ENCODE measurements at regions of chr7 and their contacts with region 1.

Region 1: GRCh38 chr7:141975806-141976523 is 2.4 kb upstream of the TAS2R38 start:
- DNase-seq: peak; percentile 85 to 90
- H3K4me3 ChIP-seq: peak overlapping the region; percentile 18; the same call in 1 of the 2 replicates
- H3K4me3 Mint-ChIP-seq: peak overlapping the region; percentile 59
- H3K27ac Mint-ChIP-seq: peak overlapping the region; percentile 42
- H3K4me1 ChIP-seq: no peaks in the 10 kb centered on the region
- H3K4me1 Mint-ChIP-seq: peaks cover 6% of the 10 kb centered on the region
- H3K27me3 ChIP-seq: no peaks in the 10 kb centered on the region
- H3K27me3 Mint-ChIP-seq: no peaks in the 10 kb centered on the region
- CTCF ChIP-seq: peak; percentile 89 to 93

Region 2: DNA sequence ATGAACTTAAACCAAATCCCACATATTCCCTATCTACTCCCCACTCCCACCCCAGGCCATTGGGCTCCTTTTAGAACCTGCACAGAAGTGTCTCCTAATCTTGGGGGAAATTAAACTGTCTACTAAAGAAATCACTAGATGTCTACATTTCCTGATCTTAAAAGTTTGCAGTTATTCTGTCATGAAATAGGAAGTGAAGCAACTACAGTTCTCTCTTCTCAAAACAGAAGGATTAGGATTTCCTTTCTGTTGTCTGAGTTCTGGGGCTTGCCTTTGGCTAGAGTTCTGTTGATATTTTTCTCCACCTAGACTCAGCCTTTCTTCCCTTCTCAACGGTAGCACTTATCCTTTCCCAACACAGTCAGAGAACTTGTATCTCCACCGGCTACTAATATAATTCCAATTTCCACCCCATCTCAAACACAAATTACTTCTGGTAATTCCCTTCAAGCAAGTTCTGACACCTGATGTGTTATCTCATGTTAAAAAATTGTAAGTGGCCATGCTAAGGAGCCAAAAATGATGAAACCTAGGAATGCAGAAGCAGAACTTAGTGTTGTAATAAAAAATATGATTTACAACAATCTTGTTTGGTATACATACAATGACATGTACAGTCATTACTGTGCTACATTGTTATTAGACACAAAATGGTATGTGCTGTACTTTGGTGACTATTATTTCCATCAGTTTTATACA is 47.7 kb before region 1 on chr7:
- CTCF ChIA-PET with region 1: no interaction called
- POLR2A ChIA-PET with region 1: no interaction called
- intact Hi-C with region 1: no loop called
- DNase-seq: no peak
- H3K4me3 ChIP-seq: no peak overlapping the region
- H3K4me3 Mint-ChIP-seq: no peak overlapping the region
- H3K27ac Mint-ChIP-seq: no peak overlapping the region
- H3K4me1 ChIP-seq: no peaks in the 10 kb centered on the region
- H3K4me1 Mint-ChIP-seq: no peaks in the 10 kb centered on the region
- H3K27me3 ChIP-seq: no peaks in the 10 kb centered on the region
- H3K27me3 Mint-ChIP-seq: peaks cover 7% of the 10 kb centered on the region
- CTCF ChIP-seq: no peak

Region 3: DNA sequence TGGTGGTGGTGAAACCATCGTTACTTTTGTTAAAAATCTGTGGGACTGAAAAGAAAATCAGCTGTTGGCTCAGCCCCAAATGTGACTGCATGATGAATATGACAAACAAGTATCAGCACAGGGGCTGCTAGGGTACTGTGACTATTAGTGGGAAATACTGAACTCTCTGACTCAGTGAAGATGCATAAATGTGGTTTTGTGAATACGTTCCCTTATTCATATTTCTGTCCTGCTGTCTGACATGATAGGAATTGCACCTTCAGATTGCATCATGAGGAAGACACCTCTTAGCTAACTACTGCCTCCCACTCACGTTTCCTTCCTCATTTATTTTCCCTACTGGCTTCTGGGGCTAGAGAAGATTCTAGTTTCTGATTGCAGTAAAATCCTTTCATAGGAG is 30.6 kb before region 1 on chr7:
- CTCF ChIA-PET with region 1: no interaction called
- POLR2A ChIA-PET with region 1: no interaction called
- intact Hi-C with region 1: no loop called
- DNase-seq: no peak
- H3K4me3 ChIP-seq: no peak overlapping the region
- H3K4me3 Mint-ChIP-seq: no peak overlapping the region
- H3K27ac Mint-ChIP-seq: no peak overlapping the region
- H3K4me1 ChIP-seq: no peaks in the 10 kb centered on the region
- H3K4me1 Mint-ChIP-seq: no peaks in the 10 kb centered on the region
- H3K27me3 ChIP-seq: no peaks in the 10 kb centered on the region
- H3K27me3 Mint-ChIP-seq: peaks cover 7% of the 10 kb centered on the region
- CTCF ChIP-seq: no peak

Region 4: GRCh38 chr7:142012825-142013511 is 37.0 kb after region 1 on chr7:
- CTCF ChIA-PET with region 1: interaction called, 15 read pairs
- POLR2A ChIA-PET with region 1: no interaction called
- intact Hi-C with region 1: no loop called
- DNase-seq: no peak
- H3K4me3 ChIP-seq: no peak overlapping the region
- H3K4me3 Mint-ChIP-seq: no peak overlapping the region
- H3K27ac Mint-ChIP-seq: no peak overlapping the region
- H3K4me1 ChIP-seq: peaks cover 20% of the 10 kb centered on the region
- H3K4me1 Mint-ChIP-seq: peaks cover 11% of the 10 kb centered on the region
- H3K27me3 ChIP-seq: no peaks in the 10 kb centered on the region
- H3K27me3 Mint-ChIP-seq: no peaks in the 10 kb centered on the region
- CTCF ChIP-seq: no peak

Region 5: DNA sequence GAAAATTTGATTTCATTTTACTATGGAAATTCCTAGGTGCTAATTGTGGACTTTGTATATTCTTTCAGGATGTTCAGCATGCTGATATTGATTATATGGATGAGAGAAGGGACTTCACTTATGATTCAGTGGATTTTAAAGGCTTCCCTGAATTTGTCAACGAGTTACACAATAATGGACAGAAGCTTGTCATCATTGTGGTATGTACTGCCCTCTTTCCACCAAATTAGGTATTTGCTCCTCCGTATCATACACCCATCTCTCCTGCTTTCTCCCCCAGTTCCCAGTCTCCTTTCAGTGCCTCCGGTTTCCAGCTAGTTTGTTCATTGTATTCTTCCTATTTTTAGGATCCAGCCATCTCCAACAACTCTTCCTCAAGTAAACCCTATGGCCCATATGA is 54.3 kb after region 1 on chr7:
- CTCF ChIA-PET with region 1: interaction called, 13 read pairs
- POLR2A ChIA-PET with region 1: no interaction called
- intact Hi-C with region 1: loop called (anchors 1 kb)
- DNase-seq: peak in 1 of 2 experiments; percentile 21
- H3K4me3 ChIP-seq: no peak overlapping the region
- H3K4me3 Mint-ChIP-seq: no peak overlapping the region
- H3K27ac Mint-ChIP-seq: no peak overlapping the region
- H3K4me1 ChIP-seq: peaks cover 4% of the 10 kb centered on the region; the same call in 1 of the 2 replicates
- H3K4me1 Mint-ChIP-seq: no peaks in the 10 kb centered on the region
- H3K27me3 ChIP-seq: no peaks in the 10 kb centered on the region
- H3K27me3 Mint-ChIP-seq: no peaks in the 10 kb centered on the region
- CTCF ChIP-seq: peak; percentile 16 to 23

Region 6: DNA sequence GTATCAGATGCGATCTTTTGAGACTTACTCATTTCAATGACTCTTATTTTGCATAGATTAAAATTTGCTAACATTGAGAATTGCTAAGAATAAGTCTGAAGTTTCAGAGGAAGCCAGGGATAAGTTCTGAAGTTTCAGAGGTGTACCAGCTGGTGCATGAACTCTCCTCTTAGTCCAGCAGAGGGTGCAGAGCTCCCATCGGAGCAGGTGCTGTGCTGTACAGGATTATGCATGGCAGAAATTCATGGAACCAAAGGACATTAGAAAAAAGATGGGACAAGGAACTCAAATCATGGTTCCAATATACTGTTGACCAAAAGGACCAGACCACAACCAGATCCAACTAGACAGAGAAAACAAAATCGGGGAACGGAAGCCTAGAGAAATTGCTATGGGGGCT is 177.4 kb after region 1 on chr7:
- CTCF ChIA-PET with region 1: interaction called, 14 read pairs
- POLR2A ChIA-PET with region 1: no interaction called
- intact Hi-C with region 1: loop called (anchors 1 kb)
- DNase-seq: peak; percentile 46 to 58
- H3K4me3 ChIP-seq: no peak overlapping the region
- H3K4me3 Mint-ChIP-seq: no peak overlapping the region
- H3K27ac Mint-ChIP-seq: no peak overlapping the region
- H3K4me1 ChIP-seq: peaks cover 23% of the 10 kb centered on the region
- H3K4me1 Mint-ChIP-seq: peaks cover 16% of the 10 kb centered on the region
- H3K27me3 ChIP-seq: no peaks in the 10 kb centered on the region
- H3K27me3 Mint-ChIP-seq: no peaks in the 10 kb centered on the region
- CTCF ChIP-seq: peak; percentile 34 to 79

Region 7: GRCh38 chr7:142301923-142302550 is 326.1 kb after region 1 on chr7:
- CTCF ChIA-PET with region 1: interaction called, 9 read pairs
- POLR2A ChIA-PET with region 1: no interaction called
- intact Hi-C with region 1: loop called (anchors 1 kb)
- DNase-seq: peak in 1 of 2 experiments; percentile 18
- H3K4me3 ChIP-seq: no peak overlapping the region
- H3K4me3 Mint-ChIP-seq: no peak overlapping the region
- H3K27ac Mint-ChIP-seq: no peak overlapping the region
- H3K4me1 ChIP-seq: no peaks in the 10 kb centered on the region
- H3K4me1 Mint-ChIP-seq: no peaks in the 10 kb centered on the region
- H3K27me3 ChIP-seq: no peaks in the 10 kb centered on the region; the same call in 1 of the 2 replicates
- H3K27me3 Mint-ChIP-seq: peaks cover 19% of the 10 kb centered on the region
- CTCF ChIP-seq: peak; percentile 56 to 68